Body of pancreas (tissue), 4 donors: ENCODE measurements at regions of chr9 and their contacts with region 1.

Region 1: DNA sequence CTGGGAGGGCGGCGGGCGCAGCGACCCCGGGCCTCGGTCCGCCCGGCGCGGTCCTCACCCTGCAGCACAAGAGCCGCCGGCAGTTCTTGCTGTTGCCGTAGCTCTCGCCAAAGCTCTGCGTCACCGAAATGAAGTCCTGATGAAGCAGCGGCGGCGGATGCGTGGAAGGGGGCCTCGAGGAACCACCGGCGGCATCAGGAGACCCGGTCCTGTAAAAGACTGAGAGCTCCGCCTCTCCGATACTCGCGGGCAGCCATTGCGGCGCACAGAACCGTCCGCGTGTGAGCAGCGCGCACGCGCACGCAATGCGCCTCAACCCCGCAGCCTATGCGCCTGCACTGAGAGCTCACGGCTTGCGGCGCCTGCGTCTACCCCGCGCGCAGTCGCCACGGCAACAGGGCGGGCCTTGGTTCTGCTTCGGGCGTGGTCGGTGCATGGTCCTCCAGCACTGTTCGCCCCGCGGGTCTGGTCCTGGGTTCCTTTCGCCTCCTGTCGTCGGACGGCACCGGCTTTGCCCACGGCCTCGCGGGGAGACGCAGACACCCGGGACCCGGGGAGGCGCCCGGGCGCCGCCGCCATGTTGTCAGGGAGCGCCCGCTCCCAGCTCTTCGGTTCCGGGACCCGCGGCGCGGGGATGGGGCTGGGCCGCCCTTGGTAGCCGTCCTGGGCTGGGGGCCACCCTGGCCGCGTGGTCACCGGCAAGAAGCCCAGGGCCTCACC is 9.3 kb upstream of the GRIN1 start:
- DNase-seq: peak; percentile 89 to 93 (median 92)
- ATAC-seq: peak; percentile 90
- H3K4me3 ChIP-seq: peak overlapping the region; percentile 59 to 86
- H3K27ac ChIP-seq: peak overlapping the region; percentile 87 to 94 (median 90)
- H3K4me1 ChIP-seq: peaks cover 42% of the 10 kb centered on the region
- H3K27me3 ChIP-seq: no peaks in the 10 kb centered on the region
- CTCF ChIP-seq: peak in 1 of 7 experiments; percentile 7
- POLR2A ChIP-seq: peak; percentile 50 to 81 (median 81)

Region 2: DNA sequence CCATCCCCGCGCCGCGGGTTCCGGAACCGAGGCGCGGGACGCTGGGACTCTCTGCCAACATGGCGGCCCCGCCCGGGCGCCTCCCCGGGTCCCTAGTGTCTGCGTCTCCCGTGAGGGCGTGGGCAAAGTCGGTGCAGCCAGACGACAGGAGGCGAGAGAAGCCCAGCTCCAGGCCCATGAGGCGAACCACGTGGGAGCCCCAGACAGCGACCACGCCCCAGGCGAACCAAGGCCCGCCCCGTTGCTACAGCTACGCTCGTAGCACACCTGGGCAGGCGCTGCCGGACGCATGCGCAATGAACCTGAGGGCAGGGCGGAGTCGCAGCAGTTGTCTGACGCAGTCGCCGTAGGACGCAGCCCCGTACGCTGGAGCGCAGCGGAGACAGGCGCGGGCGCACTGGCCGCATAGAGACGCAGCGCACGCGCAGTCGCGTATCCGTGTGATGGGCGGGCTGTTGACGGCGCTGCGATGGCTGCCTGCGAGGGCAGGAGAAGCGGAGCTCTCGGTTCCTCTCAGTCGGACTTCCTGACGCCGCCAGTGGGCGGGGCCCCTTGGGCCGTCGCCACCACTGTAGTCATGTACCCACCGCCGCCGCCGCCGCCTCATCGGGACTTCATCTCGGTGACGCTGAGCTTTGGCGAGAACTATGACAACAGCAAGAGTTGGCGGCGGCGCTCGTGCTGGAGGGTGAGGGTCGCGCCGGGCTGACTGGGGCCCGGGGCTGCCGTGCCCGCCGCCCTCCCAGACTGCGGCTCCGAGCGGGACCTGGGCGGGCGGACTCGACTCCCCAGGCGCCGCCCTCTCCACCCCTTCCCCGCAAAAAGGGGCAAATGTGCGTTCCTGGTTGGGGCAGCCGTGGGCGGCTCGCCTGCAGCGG is 42.8 kb before region 1 on chr9 and contains the start of gene MAN1B1:
- intact Hi-C with region 1: no loop called
- DNase-seq: peak; percentile 99 to 100 (median 100)
- ATAC-seq: peak; percentile 95
- H3K4me3 ChIP-seq: peak within 1 kb of the TSS; percentile 33 to 67
- H3K27ac ChIP-seq: peak within 1 kb of the TSS; percentile 75 to 95 (median 87)
- H3K4me1 ChIP-seq: peaks cover 42% of the 10 kb centered on the region
- H3K27me3 ChIP-seq: no peaks in the 10 kb centered on the region
- CTCF ChIP-seq: peak in 3 of 7 experiments; percentile 0 to 14 (median 4)
- POLR2A ChIP-seq: peak; percentile 73 to 86 (median 84)
- total RNA-seq, gene MAN1B1: 32.6 to 34.2 TPM

Region 3: DNA sequence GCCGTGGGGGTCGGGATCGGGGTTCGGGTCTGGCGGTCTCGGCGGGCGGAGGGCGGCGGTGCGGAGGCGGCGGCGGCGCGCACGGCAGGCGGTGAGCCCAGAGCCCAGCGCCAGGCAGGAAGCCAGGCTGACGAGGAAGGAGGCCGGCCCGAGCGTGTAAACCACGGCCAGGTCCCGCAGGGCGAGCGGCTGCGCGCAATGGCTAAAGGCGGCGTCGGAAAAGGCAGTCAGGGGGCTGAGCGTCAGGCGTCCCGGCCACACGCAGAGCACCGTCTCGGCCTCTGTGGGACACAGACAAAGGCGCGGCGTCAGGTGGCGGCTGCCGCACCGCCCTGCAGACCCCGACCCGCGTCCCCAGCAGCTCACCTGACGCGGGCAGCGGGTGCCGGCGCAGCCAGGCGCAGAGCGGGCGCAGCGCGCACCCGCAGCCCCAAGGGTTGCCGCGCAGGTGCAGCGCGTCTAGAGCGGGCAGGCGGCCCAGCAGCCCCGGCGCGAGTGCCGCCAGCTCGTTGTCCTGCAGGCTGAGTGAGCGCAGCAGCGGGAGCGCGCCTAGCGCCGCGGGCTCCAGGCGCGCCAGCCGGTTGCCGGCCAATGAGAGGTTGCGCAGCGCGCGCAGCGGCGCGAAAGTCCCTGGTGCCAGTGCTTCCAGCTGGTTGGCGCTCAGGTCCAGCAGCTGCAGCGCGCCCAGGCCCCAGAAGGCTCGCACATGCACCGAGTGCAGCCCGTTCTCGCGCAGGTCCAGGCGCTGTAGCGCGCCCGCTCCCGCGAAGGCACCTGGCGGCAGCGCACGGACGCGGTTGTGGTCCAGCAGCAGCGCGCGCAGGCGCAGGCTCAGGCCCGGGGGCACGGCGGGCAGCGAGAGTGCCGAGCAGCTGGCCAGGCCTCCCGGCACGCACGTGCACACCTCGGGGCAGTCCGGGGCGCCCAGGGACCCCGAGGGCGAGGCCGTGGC is 39.6 kb after region 1 on chr9:
- intact Hi-C with region 1: loop called (anchors 5 kb)
- DNase-seq: peak; percentile 68 to 83 (median 72)
- ATAC-seq: peak; percentile 70
- H3K4me3 ChIP-seq: no peak overlapping the region
- H3K27ac ChIP-seq: peak overlapping the region in 1 of 4 donors; percentile 3
- H3K4me1 ChIP-seq: peaks cover 35% of the 10 kb centered on the region
- H3K27me3 ChIP-seq: peaks cover 0 to 5% of the 10 kb centered on the region in 2 donors
- CTCF ChIP-seq: peak in 4 of 7 experiments; percentile 20 to 45 (median 35)
- POLR2A ChIP-seq: peak in 2 of 3 donors; percentile 9 to 15

Region 4: GRCh38 chr9:137181680-137182079 is 52.1 kb after region 1 on chr9:
- intact Hi-C with region 1: loop called (anchors 5 kb)
- DNase-seq: no peak
- ATAC-seq: no peak
- H3K4me3 ChIP-seq: no peak overlapping the region
- H3K27ac ChIP-seq: no peak overlapping the region
- H3K4me1 ChIP-seq: peaks cover 13% of the 10 kb centered on the region
- H3K27me3 ChIP-seq: no peaks in the 10 kb centered on the region
- CTCF ChIP-seq: no peak
- POLR2A ChIP-seq: no peak